ENCODE measurements at regions of chr14 and their contacts with region 1.

Region 1: DNA sequence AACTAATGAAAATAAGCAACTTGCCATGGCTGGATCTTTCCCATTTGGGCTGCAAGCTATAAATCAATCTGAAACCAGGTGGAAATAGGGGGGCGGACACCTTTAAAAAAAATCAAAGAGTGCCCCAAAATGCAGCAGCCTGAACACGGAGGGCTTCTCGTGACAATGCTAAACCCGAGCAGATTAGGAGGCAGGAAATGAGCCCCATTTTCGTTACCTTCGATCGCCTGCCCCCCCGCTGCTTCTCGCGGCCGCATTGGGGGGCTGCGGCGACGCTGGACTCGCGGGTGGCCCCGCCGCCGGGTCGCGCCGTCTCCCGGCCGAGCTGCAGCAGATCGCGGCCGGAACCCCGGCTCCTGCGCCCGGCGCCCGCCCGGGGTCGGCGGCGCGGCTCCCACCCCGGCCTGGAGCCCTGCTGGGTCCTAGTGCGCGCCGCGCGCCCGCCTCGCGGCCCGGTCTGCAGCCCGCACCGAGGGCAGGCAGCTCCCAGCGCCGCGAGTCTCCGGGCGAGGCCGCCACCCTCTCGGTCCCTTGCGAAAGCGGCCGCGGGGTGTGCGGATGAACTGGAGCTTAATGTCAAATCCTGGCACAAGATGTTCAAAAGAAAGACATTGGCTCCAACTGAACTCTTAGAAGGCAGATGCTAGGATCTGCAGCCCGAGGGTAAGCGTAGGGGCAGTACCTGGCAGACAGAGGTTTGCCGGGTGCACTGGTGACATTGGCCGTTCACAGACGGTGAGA is 201.9 kb upstream of the FOXN3 start:
- DNase-seq: peak; percentile 51 to 79
- ATAC-seq: peak; percentile 75 to 97 (median 90)
- H3K4me3 ChIP-seq: peak overlapping the region; percentile 58 to 88 (median 79)
- H3K27ac ChIP-seq: peak overlapping the region; percentile 69 to 90 (median 82)
- H3K4me1 ChIP-seq: peaks cover 6 to 54% (median 39%) of the 10 kb centered on the region in 9 donors
- H3K27me3 ChIP-seq: no peaks in the 10 kb centered on the region
- CTCF ChIP-seq: no peak

Region 2: DNA sequence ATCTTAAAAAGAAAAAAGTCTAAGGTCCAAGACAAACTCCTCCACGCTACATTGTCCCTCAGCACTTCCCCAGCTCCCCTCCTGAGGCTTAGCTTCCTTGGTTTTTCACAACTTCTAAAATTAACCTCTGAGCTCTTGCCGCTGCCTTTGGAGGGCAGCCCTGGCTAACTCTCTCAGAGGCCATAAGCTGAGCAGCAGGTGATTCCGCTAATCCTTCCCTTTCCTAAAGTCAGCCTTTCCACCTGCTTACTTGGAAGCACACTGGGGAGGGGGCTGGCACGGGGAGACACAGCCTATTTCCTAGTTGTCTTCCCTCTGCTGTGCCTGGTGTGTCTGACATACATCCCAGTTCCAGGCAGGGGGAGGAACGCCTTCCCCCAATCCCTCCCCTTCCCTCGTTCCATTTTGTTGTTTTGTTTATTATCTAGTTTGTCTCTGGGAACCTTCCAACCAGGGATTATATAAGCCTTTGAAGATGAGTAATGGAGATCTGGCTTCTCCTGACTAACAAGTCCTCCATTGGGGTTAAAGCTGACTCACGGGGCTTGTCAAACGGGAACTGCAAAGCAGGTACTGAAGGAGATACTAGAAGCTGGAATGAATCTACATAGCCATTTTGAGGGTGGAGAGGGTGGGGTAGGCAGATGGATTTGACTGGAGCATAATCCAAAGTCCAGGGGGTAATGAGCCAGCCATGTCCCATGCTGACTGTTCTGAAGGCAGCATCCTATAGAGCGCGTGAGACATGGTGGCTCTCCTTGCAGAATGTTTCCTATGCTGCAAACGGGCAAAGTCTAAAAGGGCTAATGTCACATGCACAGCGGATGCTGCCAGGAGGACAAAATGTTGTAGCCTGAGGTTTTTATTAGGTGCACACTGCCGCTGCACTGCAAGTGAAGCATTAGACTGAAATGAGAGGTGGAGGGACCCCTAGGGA is 432.8 kb before region 1 on chr14:
- intact Hi-C with region 1: loop called in 1 of 10 experiments (anchors 10 kb)
- DNase-seq: no peak
- ATAC-seq: peak; percentile 43 to 84 (median 72)
- H3K4me3 ChIP-seq: no peak overlapping the region
- H3K27ac ChIP-seq: peak overlapping the region in 9 of 10 donors; percentile 11 to 77 (median 66)
- H3K4me1 ChIP-seq: peaks cover 10 to 48% (median 40%) of the 10 kb centered on the region in 9 donors
- H3K27me3 ChIP-seq: no peaks in the 10 kb centered on the region
- CTCF ChIP-seq: peak in 3 of 9 donors; percentile 24 to 29 (median 26)

Region 3: GRCh38 chr14:89564286-89564957 is 54.6 kb before region 1 on chr14:
- intact Hi-C with region 1: loop called in 1 of 10 experiments (anchors 10 kb)
- DNase-seq: no peak
- ATAC-seq: peak in 6 of 8 donors; percentile 36 to 58 (median 46)
- H3K4me3 ChIP-seq: no peak overlapping the region
- H3K27ac ChIP-seq: peak overlapping the region in 7 of 10 donors; percentile 21 to 51 (median 29)
- H3K4me1 ChIP-seq: peaks cover 0 to 39% (median 23%) of the 10 kb centered on the region in 9 donors
- H3K27me3 ChIP-seq: no peaks in the 10 kb centered on the region
- CTCF ChIP-seq: no peak

Region 4: DNA sequence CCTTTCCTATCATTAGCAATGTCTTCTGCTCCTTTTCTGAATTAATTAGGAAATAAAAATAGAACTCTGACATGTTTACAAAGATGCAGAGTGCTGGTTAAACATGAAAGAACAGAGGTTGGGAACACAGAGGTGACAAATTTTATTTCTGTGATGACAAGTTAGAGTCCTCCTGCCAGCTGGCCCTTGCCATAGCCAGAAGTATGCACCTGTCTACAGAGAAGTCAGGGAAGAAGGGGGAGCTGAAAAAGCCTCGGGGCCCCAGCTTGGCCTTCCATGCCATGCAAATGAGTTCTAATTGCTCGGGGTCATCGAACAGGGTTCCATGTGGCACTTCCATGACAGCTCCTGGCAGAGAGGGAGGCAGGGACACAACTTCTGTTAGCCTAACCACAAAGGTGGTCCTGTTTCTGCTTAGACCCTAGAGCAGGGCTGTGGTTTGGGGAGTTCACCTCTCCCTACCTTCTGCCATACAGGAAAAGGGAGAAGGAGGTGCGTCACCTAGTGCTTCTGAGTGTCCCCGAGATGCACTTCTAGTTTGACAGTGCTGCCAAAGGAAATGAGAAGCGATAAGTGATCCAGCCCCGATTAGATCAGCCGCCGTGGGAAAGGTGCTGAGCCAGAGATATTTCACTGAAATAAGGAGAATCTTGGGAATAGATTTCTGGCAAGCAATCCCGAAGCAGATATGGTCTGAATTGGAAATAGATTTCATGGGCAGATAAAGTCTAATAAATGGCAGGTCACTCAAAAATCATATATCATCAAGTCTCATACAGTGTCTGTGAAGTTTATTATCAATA is 46.2 kb before region 1 on chr14:
- intact Hi-C with region 1: loop called in 2 of 10 experiments (anchors 5 to 10 kb)
- DNase-seq: no peak
- ATAC-seq: peak in 6 of 8 donors; percentile 20 to 83 (median 50)
- H3K4me3 ChIP-seq: no peak overlapping the region
- H3K27ac ChIP-seq: peak overlapping the region in 8 of 10 donors; percentile 23 to 64 (median 48)
- H3K4me1 ChIP-seq: peaks cover 15 to 76% (median 42%) of the 10 kb centered on the region in 9 donors
- H3K27me3 ChIP-seq: no peaks in the 10 kb centered on the region
- CTCF ChIP-seq: no peak

Region 5: DNA sequence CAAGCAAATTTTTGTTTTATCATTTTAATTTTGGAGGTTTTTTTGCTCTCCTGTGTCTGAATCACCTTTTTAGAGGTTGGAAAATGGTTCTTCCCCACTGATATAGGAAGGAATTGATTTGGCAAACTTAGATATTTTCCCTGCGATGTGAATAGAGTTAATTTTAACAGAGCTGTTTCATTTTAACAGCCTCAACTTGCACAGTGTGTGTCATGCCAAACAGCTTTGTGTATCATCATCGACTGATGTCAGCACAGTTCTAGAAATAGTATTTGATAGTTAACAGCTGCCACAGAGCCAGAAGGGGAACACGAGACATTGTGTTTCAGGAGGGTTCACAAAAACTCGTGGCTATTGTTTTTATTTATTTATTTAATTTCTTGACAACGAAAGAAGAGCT is 41.2 kb after region 1 on chr14:
- intact Hi-C with region 1: loop called in 1 of 10 experiments (anchors 5 kb)
- DNase-seq: peak in 1 of 2 donors; percentile 43
- ATAC-seq: peak; percentile 88 to 98 (median 94)
- H3K4me3 ChIP-seq: peak overlapping the region in 4 of 10 donors; percentile 5 to 15 (median 14)
- H3K27ac ChIP-seq: peak overlapping the region in 9 of 10 donors; percentile 27 to 71 (median 47)
- H3K4me1 ChIP-seq: peaks cover 0 to 23% (median 14%) of the 10 kb centered on the region in 9 donors
- H3K27me3 ChIP-seq: no peaks in the 10 kb centered on the region
- CTCF ChIP-seq: no peak

Region 6: GRCh38 chr14:89701211-89702043 is 82.4 kb after region 1 on chr14:
- intact Hi-C with region 1: loop called in 4 of 10 experiments (anchors 5 to 10 kb)
- DNase-seq: peak; percentile 92
- ATAC-seq: peak; percentile 92 to 98 (median 97)
- H3K4me3 ChIP-seq: peak overlapping the region; percentile 14 to 70 (median 64)
- H3K27ac ChIP-seq: peak overlapping the region; percentile 71 to 90 (median 86)
- H3K4me1 ChIP-seq: peaks cover 2 to 22% (median 17%) of the 10 kb centered on the region in 9 donors
- H3K27me3 ChIP-seq: no peaks in the 10 kb centered on the region
- CTCF ChIP-seq: no peak